Mammary epithelial cell (primary cell): ENCODE measurements at regions of chr6 and their contacts with region 1.

Region 1: GRCh38 chr6:36912586-36912985 is 26.8 kb downstream of the C6orf89 start:
- DNase-seq: peak; percentile 98
- H3K4me3 ChIP-seq: no peak overlapping the region
- H3K27ac ChIP-seq: no peak overlapping the region
- H3K4me1 ChIP-seq: peaks cover 28% of the 10 kb centered on the region
- H3K27me3 ChIP-seq: peaks cover 3% of the 10 kb centered on the region
- CTCF ChIP-seq: peak in 1 of 2 donors; percentile 17

Region 2: GRCh38 chr6:36765594-36766398 is 146.8 kb before region 1 on chr6:
- CTCF ChIA-PET with region 1: no interaction called
- dilution Hi-C with region 1: no loop called
- in situ Hi-C with region 1: no loop called
- intact Hi-C with region 1: loop called (anchors 1 kb)
- DNase-seq: peak; percentile 63
- H3K4me3 ChIP-seq: no peak overlapping the region
- H3K27ac ChIP-seq: no peak overlapping the region
- H3K4me1 ChIP-seq: peaks cover 21% of the 10 kb centered on the region
- H3K27me3 ChIP-seq: no peaks in the 10 kb centered on the region
- CTCF ChIP-seq: peak; percentile 94 to 98

Region 3: DNA sequence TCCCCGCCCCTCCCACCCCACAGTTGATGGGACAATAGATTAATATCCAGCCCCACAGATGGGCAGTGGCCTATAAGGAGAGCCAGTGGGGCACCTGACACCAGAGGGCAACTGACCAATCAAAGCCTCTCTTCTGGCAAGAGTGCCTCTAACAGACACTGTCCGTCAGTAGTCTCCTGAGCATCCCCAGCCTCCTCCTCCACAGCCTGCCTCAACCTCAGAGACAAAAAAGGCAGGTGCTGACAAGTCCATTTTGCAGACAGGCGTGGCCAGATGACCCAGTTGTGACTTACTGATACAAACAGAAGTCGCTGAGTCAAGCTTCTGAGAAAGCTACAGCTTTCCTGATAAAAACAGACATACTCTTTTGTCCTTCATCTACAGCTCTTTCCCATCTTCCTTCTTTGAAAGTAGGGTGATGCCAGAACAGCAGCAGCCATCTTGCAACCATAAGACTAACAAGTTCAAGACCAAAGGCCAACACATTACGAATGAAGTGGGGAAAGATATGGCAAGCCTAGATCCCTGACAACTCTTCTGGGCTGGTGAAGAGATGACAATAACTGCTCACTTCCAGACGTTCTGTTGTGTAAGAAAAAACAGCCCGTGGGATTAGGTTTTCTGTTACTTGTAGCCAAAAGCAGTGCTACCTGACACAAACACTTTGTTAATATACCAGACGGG is 50.3 kb before region 1 on chr6:
- CTCF ChIA-PET with region 1: no interaction called
- dilution Hi-C with region 1: loop called (anchors 5 kb)
- in situ Hi-C with region 1: no loop called
- intact Hi-C with region 1: no loop called
- DNase-seq: peak; percentile 90
- H3K4me3 ChIP-seq: no peak overlapping the region
- H3K27ac ChIP-seq: peak overlapping the region; percentile 51
- H3K4me1 ChIP-seq: peaks cover 15% of the 10 kb centered on the region
- H3K27me3 ChIP-seq: no peaks in the 10 kb centered on the region
- CTCF ChIP-seq: no peak

Region 4: DNA sequence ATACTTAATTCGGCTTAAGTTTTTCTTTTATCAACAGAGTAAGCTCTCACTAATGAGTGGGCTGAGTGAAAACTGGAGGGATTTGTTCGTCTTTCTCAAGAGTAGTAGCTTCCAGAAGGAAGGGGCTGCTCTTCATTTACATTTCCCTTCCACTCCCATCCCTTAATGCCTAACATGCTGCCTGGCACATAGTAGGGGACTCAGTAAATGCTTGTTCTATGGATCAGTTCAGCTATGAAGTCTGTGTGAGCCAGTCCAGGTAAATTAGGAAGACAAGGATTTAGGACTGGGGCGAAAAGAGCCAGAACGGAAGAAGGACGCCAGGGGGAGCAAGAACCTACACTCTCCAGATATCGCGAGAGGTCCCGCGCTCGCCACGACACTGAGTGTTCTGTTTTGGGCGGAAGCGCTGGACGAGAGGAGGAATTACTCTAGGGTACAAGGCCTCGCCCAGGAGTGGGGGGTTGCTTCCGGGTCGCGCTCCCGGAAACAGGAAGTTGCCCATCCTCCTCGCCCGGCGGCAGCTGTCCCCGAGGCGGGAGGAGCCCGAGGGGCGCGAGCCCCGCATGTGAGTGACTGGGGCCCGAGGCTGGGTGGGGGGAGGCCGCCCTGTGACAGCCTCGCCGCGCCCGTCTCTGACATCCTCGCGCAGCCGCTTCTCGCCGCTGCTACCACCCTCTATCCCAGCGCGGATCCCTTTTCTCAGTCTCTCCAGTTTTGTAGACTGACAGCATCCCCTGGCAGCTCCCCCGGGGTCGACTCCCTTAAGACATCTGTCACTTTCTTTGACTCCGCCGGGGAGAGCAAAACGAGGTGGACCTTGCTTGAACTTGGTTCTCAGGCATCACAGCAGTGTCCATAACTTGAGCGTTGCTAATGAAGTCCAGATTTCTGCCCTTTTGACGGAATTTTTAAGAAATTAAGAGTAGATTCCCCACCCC is 26.9 kb before region 1 on chr6 and contains the start of gene C6orf89:
- CTCF ChIA-PET with region 1: no interaction called
- dilution Hi-C with region 1: no loop called
- in situ Hi-C with region 1: no loop called
- intact Hi-C with region 1: loop called (anchors 1 kb)
- DNase-seq: peak; percentile 93
- H3K4me3 ChIP-seq: peak within 1 kb of the TSS; percentile 53 to 70 (median 64)
- H3K27ac ChIP-seq: peak within 1 kb of the TSS; percentile 57
- H3K4me1 ChIP-seq: peaks cover 10% of the 10 kb centered on the region
- H3K27me3 ChIP-seq: no peaks in the 10 kb centered on the region
- CTCF ChIP-seq: peak; percentile 68 to 89
- total RNA-seq, gene C6orf89: 34.3 to 42.2 TPM

Region 5: GRCh38 chr6:36969988-36970891 is 57.7 kb after region 1 on chr6:
- CTCF ChIA-PET with region 1: no interaction called
- dilution Hi-C with region 1: loop called (anchors 5 kb)
- in situ Hi-C with region 1: no loop called
- intact Hi-C with region 1: no loop called
- DNase-seq: no peak
- H3K4me3 ChIP-seq: no peak overlapping the region
- H3K27ac ChIP-seq: no peak overlapping the region
- H3K4me1 ChIP-seq: peaks cover 13% of the 10 kb centered on the region
- H3K27me3 ChIP-seq: no peaks in the 10 kb centered on the region
- CTCF ChIP-seq: no peak

Region 6: DNA sequence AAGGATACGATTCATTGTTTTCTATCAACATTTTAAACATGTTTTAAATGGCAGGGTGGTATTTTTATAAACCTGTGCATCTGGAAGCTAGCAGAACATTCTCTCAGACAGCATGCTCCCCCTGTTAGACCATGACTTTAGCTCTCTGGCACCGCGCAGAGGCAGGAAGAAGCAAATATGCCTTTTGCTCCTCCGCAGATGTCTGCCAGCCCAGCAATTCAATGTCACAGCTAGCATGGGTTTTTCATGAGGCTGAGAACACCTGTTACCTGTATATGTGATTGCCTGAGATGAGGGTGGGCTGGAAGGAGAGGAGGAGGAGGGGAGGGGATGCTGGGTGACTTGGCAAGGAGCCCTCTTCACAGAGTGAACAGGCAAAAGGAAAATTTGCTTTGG is 66.8 kb after region 1 on chr6:
- CTCF ChIA-PET with region 1: no interaction called
- dilution Hi-C with region 1: loop called (anchors 5 kb)
- in situ Hi-C with region 1: no loop called
- intact Hi-C with region 1: loop called (anchors 1 kb)
- DNase-seq: no peak
- H3K4me3 ChIP-seq: no peak overlapping the region
- H3K27ac ChIP-seq: no peak overlapping the region
- H3K4me1 ChIP-seq: peaks cover 4% of the 10 kb centered on the region
- H3K27me3 ChIP-seq: no peaks in the 10 kb centered on the region
- CTCF ChIP-seq: peak in 1 of 2 donors; percentile 34

Region 7: GRCh38 chr6:37011656-37012378 is 99.2 kb after region 1 on chr6:
- CTCF ChIA-PET with region 1: no interaction called
- dilution Hi-C with region 1: loop called (anchors 5 kb)
- in situ Hi-C with region 1: no loop called
- intact Hi-C with region 1: no loop called
- DNase-seq: no peak
- H3K4me3 ChIP-seq: no peak overlapping the region
- H3K27ac ChIP-seq: no peak overlapping the region
- H3K4me1 ChIP-seq: no peaks in the 10 kb centered on the region
- H3K27me3 ChIP-seq: no peaks in the 10 kb centered on the region
- CTCF ChIP-seq: no peak